ENCODE measurements at regions of chr12 and their contacts with region 1.

Region 1: DNA sequence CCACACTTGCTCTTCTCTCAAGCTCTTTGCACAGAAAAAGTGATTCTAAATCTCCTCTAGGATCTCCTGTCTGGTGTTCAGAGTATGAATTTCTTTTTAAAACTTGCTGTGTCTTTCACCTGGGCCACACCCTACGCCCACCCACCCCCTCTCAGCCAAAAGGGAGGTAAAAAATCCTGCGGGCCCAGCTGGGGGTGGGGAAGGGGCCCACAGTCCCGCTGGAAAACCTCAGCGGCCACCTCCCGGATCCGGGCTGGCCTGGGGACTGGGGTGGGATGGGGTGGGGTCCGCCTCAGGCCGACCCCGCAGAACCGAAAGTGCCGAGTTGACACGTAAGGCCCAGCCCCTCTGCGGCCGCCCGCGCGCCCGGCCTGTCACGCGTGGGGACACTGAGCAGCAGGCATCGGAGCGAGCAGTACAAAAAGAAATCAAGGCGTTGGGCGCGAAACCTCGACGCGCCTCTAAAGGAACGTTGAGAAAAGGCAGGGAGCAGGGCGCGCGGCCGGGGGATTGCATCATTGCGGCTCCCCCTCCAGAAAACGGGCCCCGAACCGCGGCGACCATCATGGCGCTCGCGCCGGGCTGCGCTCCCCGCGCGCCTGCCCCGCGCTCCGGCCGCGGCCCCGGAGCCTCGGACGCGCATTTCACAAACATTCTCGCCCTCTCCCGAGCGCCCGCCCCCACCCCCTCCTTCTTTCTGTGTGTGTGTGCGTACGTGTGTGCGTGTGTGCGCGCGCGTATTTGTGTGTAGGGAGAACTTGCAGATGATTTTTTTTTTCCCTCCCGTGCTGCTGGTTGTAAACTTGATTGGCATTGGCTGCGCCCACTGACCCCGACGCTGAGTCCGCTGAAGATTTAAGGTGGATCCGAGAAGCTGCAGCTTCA is 7.7 kb downstream of the CDKN1B start:
- DNase-seq: peak; percentile 80 to 97 (median 90)
- ATAC-seq: peak; percentile 62 to 70
- H3K4me3 Mint-ChIP-seq: peak overlapping the region; percentile 88 to 98 (median 95)
- H3K27ac Mint-ChIP-seq: peak overlapping the region; percentile 94 to 100 (median 98)
- H3K4me1 Mint-ChIP-seq: peaks cover 14 to 60% (median 45%) of the 10 kb centered on the region in 4 donors
- H3K27me3 Mint-ChIP-seq: peaks cover 0 to 6% (median 0%) of the 10 kb centered on the region in 5 donors

Region 2: GRCh38 chr12:12356886-12357718 is 367.8 kb before region 1 on chr12 and contains the start of gene BORCS5:
- POLR2A ChIA-PET with region 1: interaction called, 73 read pairs
- DNase-seq: peak; percentile 91 to 99 (median 98)
- ATAC-seq: peak; percentile 89 to 93
- H3K4me3 Mint-ChIP-seq: peak within 1 kb of the TSS; percentile 90 to 98 (median 96)
- H3K27ac Mint-ChIP-seq: peak within 1 kb of the TSS; percentile 95 to 100 (median 99)
- H3K4me1 Mint-ChIP-seq: peaks cover 24 to 52% (median 45%) of the 10 kb centered on the region in 4 donors
- H3K27me3 Mint-ChIP-seq: no peaks in the 10 kb centered on the region
- polyA plus RNA-seq, gene BORCS5: 14.2 to 18.4 (median 15.7) TPM

Region 3: DNA sequence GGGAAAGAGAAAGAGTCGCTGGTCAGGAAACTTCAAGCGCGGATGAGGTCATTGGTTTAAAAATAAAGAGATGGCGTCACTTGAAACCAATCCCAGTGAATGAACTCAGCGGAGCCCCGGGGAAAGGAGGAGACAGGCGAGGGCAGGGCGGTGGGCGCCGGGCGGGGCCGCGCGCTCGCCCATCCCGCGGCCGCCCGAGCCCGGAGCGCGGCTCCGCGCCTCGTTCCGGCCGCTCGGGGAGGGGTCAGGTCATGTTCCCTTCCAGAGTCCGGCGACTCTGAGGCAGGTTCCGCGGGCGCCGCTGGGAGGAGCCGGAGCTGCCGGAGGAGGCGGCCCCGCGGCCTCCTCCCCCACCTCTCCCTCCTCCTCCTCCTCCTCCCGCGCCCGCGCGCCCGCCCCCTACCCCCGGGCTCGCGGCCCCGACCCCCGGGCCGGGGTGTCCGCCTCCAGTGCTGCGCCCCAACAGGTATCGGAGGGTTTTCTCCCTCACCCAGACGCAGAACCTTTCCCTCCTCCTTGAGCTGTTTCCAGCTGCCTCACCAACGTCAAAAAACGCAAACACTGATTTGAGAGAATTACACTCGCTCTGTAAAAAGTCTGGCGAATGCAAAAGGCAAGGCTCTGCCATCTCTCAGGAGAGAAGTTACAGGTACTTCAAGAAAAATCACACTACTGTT is 162.2 kb before region 1 on chr12 and contains the start of gene DUSP16:
- POLR2A ChIA-PET with region 1: interaction called, 18 read pairs
- DNase-seq: peak; percentile 57 to 92 (median 84)
- ATAC-seq: peak; percentile 69 to 70
- H3K4me3 Mint-ChIP-seq: peak within 1 kb of the TSS; percentile 85 to 95 (median 94)
- H3K27ac Mint-ChIP-seq: peak within 1 kb of the TSS; percentile 93 to 99 (median 98)
- H3K4me1 Mint-ChIP-seq: peaks cover 11 to 37% (median 30%) of the 10 kb centered on the region in 4 donors
- H3K27me3 Mint-ChIP-seq: no peaks in the 10 kb centered on the region
- polyA plus RNA-seq, gene DUSP16: 4.5 to 4.7 (median 4.6) TPM

Region 4: GRCh38 chr12:12696562-12697383 is 28.1 kb before region 1 on chr12:
- POLR2A ChIA-PET with region 1: interaction called, 639 read pairs
- DNase-seq: peak; percentile 82 to 96 (median 93)
- ATAC-seq: peak; percentile 88 to 90
- H3K4me3 Mint-ChIP-seq: peak overlapping the region; percentile 86 to 97 (median 94)
- H3K27ac Mint-ChIP-seq: peak overlapping the region; percentile 98 to 100 (median 100)
- H3K4me1 Mint-ChIP-seq: peaks cover 12 to 35% (median 30%) of the 10 kb centered on the region in 4 donors
- H3K27me3 Mint-ChIP-seq: no peaks in the 10 kb centered on the region

Region 5: DNA sequence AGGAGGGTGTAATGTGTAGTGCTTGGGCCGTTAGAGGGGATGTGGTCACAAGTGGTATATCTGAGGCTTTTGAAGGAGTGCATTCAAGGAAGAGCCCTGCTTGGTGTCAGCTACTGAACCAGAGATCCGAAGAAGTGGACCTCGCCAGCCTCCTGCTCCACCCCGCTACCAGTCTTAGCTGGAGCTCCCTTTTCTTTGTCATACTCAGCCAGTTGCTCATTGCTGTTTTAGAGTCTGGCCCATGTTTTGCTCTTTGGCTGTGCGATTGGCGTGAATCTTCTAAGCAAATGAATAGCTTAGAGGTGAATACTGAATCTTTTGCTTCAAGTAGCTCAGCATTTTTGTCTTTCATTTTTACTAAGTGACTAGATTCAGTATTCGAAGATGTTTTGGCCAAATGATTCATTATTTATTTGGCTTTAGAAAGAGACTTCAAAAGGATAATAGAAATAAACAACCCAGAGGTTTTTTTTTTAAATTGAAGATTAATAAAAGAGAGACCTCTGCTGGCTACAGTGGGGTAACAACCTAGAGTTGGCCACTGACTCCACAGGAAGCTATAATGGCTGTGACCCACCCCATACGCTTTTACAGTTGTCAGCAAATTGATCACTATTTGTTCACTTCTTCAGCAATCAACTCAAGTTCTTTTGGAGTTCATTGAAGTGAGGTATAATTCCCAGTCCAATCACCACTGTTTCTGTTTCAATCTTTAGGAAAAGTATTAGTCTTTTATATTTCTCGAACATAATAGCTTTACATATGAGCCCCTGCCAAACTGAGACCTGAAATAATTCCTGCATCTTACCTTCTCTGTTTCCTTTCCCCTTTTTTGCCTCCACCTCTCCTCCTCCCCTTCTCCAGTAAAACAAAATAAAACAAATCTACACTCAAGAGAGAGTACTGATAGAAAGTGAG is 12.1 kb after region 1 on chr12:
- POLR2A ChIA-PET with region 1: interaction called, 150 read pairs
- DNase-seq: peak in 8 of 10 donors; percentile 8 to 76 (median 54)
- ATAC-seq: peak; percentile 85 to 88
- H3K4me3 Mint-ChIP-seq: peak overlapping the region; percentile 65 to 82 (median 75)
- H3K27ac Mint-ChIP-seq: peak overlapping the region; percentile 88 to 96 (median 90)
- H3K4me1 Mint-ChIP-seq: peaks cover 9 to 46% (median 30%) of the 10 kb centered on the region in 4 donors
- H3K27me3 Mint-ChIP-seq: no peaks in the 10 kb centered on the region

Region 6: DNA sequence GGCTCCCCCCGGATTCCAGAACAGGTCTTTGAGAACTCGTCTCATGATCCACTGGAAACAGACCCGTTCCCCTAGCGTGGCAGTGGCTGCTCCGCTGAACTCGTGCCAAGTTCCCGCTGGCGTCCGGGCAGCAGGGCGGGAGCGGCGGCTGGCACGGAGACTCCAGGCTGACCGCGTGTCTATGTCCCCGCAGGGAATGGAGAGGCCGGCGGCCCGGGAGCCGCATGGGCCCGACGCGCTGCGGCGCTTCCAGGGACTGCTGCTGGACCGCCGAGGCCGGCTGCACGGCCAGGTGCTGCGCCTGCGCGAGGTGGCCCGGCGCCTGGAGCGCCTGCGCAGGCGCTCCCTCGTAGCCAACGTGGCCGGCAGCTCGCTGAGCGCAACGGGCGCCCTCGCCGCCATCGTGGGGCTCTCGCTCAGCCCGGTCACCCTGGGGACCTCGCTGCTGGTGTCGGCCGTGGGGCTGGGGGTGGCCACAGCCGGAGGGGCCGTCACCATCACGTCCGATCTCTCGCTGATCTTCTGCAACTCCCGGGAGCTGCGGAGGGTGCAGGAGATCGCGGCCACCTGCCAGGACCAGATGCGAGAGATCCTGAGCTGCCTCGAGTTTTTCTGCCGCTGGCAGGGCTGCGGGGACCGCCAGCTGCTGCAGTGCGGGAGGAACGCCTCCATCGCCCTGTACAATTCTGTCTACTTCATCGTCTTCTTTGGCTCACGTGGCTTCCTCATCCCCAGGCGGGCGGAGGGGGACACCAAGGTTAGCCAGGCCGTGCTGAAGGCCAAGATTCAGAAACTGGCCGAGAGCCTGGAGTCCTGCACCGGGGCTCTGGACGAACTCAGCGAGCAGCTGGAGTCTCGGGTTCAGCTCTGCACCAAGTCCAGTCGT is 62.1 kb after region 1 on chr12:
- POLR2A ChIA-PET with region 1: interaction called, 14 read pairs
- DNase-seq: peak; percentile 53 to 83 (median 73)
- ATAC-seq: peak; percentile 85 to 90
- H3K4me3 Mint-ChIP-seq: peak overlapping the region; percentile 80 to 91 (median 85)
- H3K27ac Mint-ChIP-seq: peak overlapping the region; percentile 79 to 96 (median 92)
- H3K4me1 Mint-ChIP-seq: peaks cover 4 to 26% (median 20%) of the 10 kb centered on the region in 4 donors
- H3K27me3 Mint-ChIP-seq: no peaks in the 10 kb centered on the region

Region 7: DNA sequence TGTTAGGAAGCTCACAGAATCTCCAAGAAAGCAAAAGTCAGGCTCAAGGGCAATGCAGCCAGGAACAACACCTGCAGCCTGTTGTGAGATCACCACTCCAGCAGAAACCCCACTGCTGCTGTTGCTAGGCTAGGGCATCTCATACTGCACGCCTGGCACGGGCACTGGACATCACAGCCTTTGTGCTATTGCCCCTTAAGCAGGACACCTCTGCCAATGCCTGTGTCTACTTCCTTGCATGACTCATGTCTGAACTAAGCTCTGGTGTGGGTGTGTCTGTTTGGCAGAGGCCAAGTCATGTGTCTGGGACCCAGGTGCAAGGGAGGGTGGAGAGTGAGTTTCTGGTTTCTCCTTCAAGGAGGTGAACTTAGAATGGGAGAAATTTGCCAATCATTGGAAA is 78.3 kb after region 1 on chr12:
- POLR2A ChIA-PET with region 1: interaction called, 20 read pairs
- DNase-seq: peak in 2 of 10 donors; percentile 13 to 69
- ATAC-seq: peak in 1 of 2 donors; percentile 59
- H3K4me3 Mint-ChIP-seq: peak overlapping the region in 3 of 10 donors; percentile 6 to 22 (median 16)
- H3K27ac Mint-ChIP-seq: peak overlapping the region in 8 of 10 donors; percentile 41 to 87 (median 80)
- H3K4me1 Mint-ChIP-seq: peaks cover 18 to 59% (median 41%) of the 10 kb centered on the region in 4 donors
- H3K27me3 Mint-ChIP-seq: no peaks in the 10 kb centered on the region

Measured in naive thymus-derived CD8-positive, alpha-beta T cell (primary cell).